ENCODE measurements at regions of chr9 and their contacts with region 1.

Region 1: DNA sequence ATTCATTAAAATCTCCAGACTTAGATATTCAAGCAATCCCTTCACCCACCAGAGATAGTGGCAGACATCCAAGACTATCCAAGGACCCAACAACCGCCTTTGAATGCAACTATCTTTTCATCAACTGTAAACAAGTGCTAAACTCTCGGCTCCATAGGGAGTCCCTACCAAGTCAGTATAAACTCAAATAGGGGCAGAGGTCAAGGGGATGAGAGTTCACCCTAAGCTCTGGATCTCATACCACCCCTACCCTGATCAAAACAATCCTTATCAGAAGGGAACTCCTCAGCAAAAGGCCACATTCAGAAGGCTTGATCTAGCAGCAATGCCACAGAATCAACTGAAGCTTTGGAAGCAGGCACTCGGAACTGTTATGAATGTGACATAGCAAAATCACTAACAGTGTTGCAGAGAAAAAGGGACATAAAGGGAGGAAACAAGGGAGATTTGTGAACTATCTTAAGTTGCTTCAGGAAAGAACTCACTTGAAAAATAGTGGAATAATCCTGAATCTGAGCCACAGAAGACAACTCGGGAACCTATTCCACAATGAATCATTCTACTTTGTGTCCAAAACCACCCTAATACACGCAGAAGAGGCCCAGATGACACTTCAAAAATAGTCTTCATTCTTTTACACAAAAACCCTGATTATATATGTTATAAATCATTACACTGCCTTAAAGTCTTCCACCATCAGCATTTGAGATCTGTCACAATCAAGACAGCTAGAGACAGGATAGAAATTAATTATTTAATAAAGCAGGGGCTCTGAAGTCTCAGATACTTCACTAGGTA is 49.8 kb downstream of the NR6A1 start:
- DNase-seq: peak; percentile 71
- H3K4me3 ChIP-seq: no peak overlapping the region
- H3K27ac ChIP-seq: peak overlapping the region; percentile 67
- H3K4me1 ChIP-seq: peaks cover 31% of the 10 kb centered on the region
- H3K27me3 ChIP-seq: no peaks in the 10 kb centered on the region

Region 2: DNA sequence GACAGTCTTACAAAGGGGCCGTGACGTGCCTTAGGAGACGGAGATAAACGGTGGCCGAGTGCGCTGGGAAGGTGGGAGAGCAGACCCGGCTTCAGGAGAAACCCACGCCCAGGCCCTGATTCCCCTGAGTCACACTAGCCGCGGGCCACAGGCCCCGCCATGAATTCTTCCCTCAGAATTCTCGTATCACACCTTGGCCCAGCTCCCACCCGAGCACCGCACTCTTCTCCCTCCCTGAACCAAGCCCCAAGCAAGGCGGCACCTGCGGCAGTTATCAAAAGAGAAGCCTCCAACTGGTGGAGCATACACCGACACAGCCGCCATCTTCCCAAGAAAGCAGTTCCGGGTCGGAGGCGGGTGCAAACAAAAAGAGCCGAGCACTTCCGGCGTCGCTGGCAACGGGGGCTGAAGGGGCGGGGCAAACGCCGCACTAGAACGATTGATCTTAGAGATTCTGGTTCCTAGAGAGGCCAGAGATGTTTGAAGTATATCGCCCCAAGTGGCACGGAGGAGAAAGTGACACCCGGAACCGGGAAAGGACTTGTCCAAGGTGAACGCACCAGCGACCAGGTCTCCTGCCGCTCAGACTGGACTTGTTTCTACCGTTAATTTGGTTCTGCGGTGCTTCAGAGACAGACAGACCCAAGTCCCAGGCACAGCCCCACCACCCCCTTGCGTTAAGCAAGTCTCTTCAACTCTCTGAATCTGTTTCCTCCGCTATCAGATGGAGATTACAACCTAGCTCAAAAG is 306.0 kb before region 1 on chr9 and contains the start of gene PSMB7:
- in situ Hi-C with region 1: loop called (anchors 25 kb)
- DNase-seq: peak; percentile 98
- H3K4me3 ChIP-seq: peak within 1 kb of the TSS; percentile 92
- H3K27ac ChIP-seq: peak within 1 kb of the TSS; percentile 63
- H3K4me1 ChIP-seq: peaks cover 39% of the 10 kb centered on the region
- H3K27me3 ChIP-seq: no peaks in the 10 kb centered on the region
- total RNA-seq, gene PSMB7: 182 and 202 TPM in 2 replicates